Mammary epithelial cell (primary cell): ENCODE measurements at regions of chr6 and their contacts with region 1.

Region 1: GRCh38 chr6:116034327-116034726 is 26.4 kb downstream of the FRK start:
- DNase-seq: peak; percentile 67
- H3K4me3 ChIP-seq: no peak overlapping the region
- H3K27ac ChIP-seq: peak overlapping the region; percentile 6
- H3K4me1 ChIP-seq: peaks cover 20% of the 10 kb centered on the region
- H3K27me3 ChIP-seq: no peaks in the 10 kb centered on the region
- CTCF ChIP-seq: no peak

Region 2: DNA sequence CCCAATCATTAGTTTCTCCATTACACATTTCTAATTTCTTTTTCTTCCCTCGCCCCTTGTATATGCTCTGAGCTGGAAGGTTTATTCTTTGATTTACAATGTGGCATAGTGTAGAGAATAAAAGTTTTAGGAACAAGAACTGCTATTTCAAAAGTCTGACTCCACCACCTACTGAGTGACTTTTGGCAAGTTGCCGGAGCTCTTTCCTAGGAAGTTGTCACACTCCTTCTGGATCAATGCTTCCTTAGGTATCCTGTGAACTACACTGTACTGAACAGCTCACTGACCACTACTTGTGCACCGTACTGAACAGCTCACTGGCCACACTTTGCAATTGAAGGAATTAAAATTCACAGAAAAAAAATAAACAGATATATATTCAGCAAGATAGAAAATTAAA is 431.9 kb before region 1 on chr6:
- CTCF ChIA-PET with region 1: no interaction called
- dilution Hi-C with region 1: no loop called
- in situ Hi-C with region 1: no loop called
- intact Hi-C with region 1: no loop called
- DNase-seq: no peak
- H3K4me3 ChIP-seq: no peak overlapping the region
- H3K27ac ChIP-seq: no peak overlapping the region
- H3K4me1 ChIP-seq: no peaks in the 10 kb centered on the region
- H3K27me3 ChIP-seq: peaks cover 1% of the 10 kb centered on the region
- CTCF ChIP-seq: no peak

Region 3: DNA sequence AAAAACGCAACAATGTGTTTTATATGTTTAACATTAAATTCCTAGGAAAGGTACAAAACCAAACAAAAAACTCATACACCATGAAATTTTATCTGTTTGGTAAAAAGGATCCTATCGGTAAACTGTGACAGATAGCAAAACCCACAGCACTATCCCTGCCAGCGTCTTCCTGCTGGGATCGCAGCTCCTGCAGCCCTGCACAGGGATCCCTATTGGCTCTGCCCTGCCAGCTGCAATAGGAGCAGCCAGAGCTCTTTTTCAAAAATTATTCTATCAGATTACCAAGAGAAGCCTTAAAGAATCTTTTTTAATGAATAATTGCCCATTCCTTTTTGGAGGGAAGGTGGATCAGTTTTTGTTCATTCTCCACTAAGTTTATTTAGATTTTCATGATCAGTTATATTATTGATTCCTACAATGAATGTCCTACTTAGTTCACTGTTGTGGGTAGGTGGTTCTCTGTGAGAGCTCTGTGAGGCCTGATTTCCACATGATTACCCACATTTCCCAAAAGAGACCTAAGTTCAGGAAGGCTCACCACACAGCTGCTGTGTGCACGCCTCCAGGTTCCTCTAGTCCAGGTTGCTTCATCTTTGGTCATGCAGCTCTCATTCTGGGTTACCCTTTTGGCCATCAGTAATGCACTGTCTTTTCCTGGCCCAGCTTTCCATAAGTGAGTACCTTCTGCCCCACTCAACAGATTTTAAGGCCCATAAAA is 267.4 kb before region 1 on chr6:
- CTCF ChIA-PET with region 1: no interaction called
- dilution Hi-C with region 1: no loop called
- in situ Hi-C with region 1: no loop called
- intact Hi-C with region 1: no loop called
- DNase-seq: no peak
- H3K4me3 ChIP-seq: no peak overlapping the region
- H3K27ac ChIP-seq: no peak overlapping the region
- H3K4me1 ChIP-seq: no peaks in the 10 kb centered on the region
- H3K27me3 ChIP-seq: no peaks in the 10 kb centered on the region
- CTCF ChIP-seq: no peak

Region 4: DNA sequence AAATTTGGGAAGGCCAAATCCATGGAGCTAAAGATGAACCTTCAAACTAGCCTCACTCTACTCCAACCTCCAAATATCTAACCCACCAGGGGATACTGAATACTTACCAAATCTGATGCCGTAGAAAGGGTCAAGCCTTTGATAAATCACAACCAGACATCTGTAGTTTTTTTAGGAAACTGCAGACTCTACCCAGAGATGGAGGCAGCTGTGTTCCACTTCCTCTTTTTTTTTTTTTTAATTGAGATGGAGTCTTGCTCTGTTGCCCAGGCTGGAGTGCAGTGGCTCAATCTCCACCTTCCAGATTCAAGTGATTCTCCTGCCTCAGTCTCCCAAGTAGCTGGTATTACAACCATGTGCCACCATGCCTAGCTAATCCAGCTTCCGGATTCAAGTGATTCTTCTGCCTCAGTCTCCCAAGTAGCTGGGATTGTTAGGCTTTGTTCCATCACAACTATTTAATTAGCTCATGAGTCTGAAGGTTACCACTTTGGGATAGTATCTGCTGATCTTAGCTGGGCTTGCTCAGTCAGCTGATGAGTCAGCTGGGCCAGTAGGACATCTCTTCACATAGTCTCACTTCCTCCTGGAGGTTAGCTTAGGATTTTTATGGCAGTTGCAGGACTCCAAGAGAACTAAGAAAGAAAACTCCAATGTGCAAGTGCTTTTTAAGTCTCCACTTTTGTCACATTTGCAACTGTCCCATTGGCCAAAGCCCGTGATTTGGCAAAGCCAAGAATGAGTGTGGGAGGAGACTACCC is 13.0 kb after region 1 on chr6:
- CTCF ChIA-PET with region 1: no interaction called
- dilution Hi-C with region 1: no loop called
- in situ Hi-C with region 1: no loop called
- intact Hi-C with region 1: loop called (anchors 2 kb)
- DNase-seq: peak; percentile 57
- H3K4me3 ChIP-seq: no peak overlapping the region
- H3K27ac ChIP-seq: no peak overlapping the region
- H3K4me1 ChIP-seq: peaks cover 6% of the 10 kb centered on the region
- H3K27me3 ChIP-seq: no peaks in the 10 kb centered on the region
- CTCF ChIP-seq: no peak